Posterior cingulate gyrus (tissue), 11 donors: ENCODE measurements at regions of chr20 and their contacts with region 1.

Region 1: DNA sequence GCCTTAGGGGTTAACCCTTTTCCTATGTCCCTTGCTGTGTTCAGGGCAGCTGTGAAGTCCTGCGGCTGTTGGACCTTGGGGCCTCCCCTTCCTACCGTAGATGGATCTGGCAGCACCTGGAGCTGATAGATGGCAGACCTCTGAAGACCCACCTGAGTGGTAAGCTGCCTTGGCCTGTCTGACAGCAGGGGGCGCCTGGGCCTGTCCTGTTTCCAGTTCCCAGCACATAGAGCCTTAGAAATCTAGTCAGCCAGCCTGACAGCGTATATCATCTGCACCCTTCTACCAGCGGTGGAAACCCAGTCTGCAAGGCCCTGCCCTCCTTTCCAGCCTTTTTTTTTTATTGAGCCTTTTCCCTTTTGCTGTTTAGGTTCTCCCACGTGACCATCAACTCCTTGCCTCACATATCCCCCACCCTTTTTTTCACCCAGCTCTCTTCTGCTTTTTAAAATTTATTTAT is 26.6 kb downstream of the CNBD2 start:
- DNase-seq: peak; percentile 44 to 97 (median 80)

Region 2: DNA sequence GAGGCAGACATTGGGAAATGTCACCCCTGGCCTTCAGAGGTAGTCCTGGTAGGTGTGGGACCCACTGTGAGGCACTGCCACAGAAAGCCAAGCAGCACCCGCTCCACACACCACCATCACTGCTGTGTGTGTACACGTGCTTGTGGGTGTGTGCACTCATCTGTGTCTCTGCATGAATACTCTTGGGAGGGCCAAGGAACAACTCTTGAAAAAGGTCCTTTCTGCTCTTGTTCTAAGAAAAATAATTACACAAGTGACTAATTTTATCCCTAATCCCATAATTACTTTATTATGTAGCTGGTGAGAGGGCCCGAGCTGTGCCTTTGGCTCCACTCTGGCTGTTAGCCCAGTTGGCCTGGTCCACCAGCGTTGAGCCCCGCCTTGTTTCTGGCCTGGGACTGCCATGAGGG is 137.8 kb after region 1 on chr20:
- intact Hi-C with region 1: loop called (anchors 1 kb)
- DNase-seq: peak in 2 of 10 donors; percentile 62 to 81

Region 3: GRCh38 chr20:36153736-36154699 is 159.0 kb after region 1 on chr20:
- intact Hi-C with region 1: loop called (anchors 5 kb)
- DNase-seq: peak; percentile 75 to 97 (median 88)

Region 4: GRCh38 chr20:36199345-36200257 is 204.6 kb after region 1 on chr20:
- intact Hi-C with region 1: loop called (anchors 10 kb)
- DNase-seq: peak; percentile 59 to 96 (median 84)